H1 (cell line): ENCODE measurements at regions of chr19 and their contacts with region 1.

Region 1: DNA sequence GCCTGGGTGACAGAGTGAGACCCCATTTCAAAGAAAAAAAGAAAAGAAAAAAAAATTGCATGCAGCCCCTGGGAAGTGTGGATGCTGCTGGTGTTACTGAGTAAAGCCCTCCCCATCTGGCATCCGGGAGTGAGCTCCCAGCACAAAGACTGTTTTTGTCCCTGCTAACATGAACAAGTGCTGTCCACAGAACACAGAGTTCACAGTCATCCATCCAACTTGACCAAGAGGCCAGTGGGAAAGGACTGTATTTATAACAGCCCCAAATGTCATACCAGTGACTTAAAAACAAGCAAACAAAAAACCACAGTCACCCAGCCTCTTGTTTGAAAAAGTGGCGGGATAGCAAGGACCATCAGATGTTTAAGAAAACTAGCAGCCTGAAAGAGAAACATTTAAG is 10.8 kb downstream of the FBXO17 start:
- DNase-seq: no peak
- H3K4me3 ChIP-seq: no peak overlapping the region
- H3K27ac ChIP-seq: no peak overlapping the region
- H3K4me1 ChIP-seq: peaks cover 0 to 3% (median under 1%) of the 10 kb centered on the region in 4 experiments; a peak in 2 of 7 replicates
- H3K27me3 ChIP-seq: no peaks in the 10 kb centered on the region
- CTCF ChIP-seq: no peak
- EP300 ChIP-seq: no peak
- POLR2A ChIP-seq: no peak
- RAD21 ChIP-seq: no peak

Region 2: DNA sequence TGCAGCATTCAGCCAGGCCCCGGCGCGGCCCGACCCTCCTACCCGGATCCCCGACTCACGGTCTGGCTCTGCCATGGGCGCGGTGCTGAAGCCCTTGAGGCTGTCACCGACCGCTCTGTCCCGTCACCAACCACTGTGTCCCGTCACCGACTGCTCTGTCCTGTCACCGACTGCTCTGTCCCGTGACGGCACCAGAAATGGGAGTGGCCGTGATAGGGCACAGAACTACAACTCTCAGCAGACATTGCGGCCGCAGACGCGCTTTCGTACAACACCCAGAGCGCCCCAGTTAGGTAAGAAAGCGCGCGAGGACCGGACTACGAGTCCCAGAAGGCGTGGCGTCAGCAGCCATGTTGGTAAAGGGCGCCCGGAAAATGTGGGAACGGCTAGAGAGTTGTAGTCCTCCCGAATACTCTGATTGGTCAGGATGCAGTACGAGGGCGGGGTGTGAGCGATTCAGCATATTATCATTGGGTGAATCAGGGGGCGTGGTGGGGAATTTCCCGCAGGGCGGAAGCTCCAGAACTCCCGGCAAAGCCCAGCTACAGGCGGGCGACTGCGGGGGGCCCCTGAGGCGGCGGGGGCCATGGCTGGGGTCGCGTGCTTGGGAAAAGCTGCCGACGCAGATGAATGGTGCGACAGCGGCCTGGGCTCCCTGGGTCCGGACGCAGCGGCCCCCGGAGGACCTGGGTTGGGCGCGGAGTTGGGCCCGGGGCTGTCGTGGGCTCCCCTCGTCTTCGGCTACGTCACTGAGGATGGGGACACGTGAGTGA is 65.1 kb before region 1 on chr19 and contains the starts of genes NFKBIB and SIRT2:
- CTCF ChIA-PET with region 1: no interaction called
- POLR2A ChIA-PET with region 1: no interaction called
- DNase-seq: peak; percentile 96 to 98
- H3K4me3 ChIP-seq: peak within 1 kb of the TSS; percentile 74 to 90 (median 84)
- H3K27ac ChIP-seq: peak within 1 kb of the TSS; percentile 80
- H3K4me1 ChIP-seq: peaks cover 0 to 9% (median 3%) of the 10 kb centered on the region in 4 experiments; a peak in 4 of 7 replicates
- H3K27me3 ChIP-seq: peaks cover 0 to 9% (median 4%) of the 10 kb centered on the region in 4 experiments; a peak in 3 of 7 replicates
- CTCF ChIP-seq: peak in 1 of 3 experiments; percentile 1; a peak in 1 of 4 replicates
- EP300 ChIP-seq: no peak; a peak in 1 of 3 replicates
- POLR2A ChIP-seq: peak in 1 of 2 experiments; percentile 81; a peak in 2 of 3 replicates
- RAD21 ChIP-seq: no peak
- total RNA-seq, gene NFKBIB: 36.3 and 37.3 TPM in 2 replicates
- total RNA-seq, gene SIRT2: 6.1 and 6.5 TPM in 2 replicates

Region 3: GRCh38 chr19:38912600-38913514 is 51.9 kb before region 1 on chr19:
- CTCF ChIA-PET with region 1: no interaction called
- POLR2A ChIA-PET with region 1: no interaction called
- DNase-seq: no peak
- H3K4me3 ChIP-seq: no peak overlapping the region
- H3K27ac ChIP-seq: no peak overlapping the region
- H3K4me1 ChIP-seq: peaks cover 0 to 8% (median 1%) of the 10 kb centered on the region in 4 experiments; a peak in 3 of 7 replicates
- H3K27me3 ChIP-seq: no peaks in the 10 kb centered on the region; a peak in 1 of 7 replicates
- CTCF ChIP-seq: no peak
- EP300 ChIP-seq: no peak
- POLR2A ChIP-seq: 0 out of 3 replicates have a peak, but pooled peaks of 1 of the 2 experiments have one; percentile 3
- RAD21 ChIP-seq: no peak

Region 4: GRCh38 chr19:38949580-38950367 is 15.0 kb before region 1 on chr19:
- CTCF ChIA-PET with region 1: interaction called, 18 read pairs
- POLR2A ChIA-PET with region 1: interaction called, 5 read pairs
- DNase-seq: peak; percentile 87 to 99
- H3K4me3 ChIP-seq: peak overlapping the region; percentile 36 to 61 (median 54)
- H3K27ac ChIP-seq: no peak overlapping the region; the same call in 1 of the 2 replicates
- H3K4me1 ChIP-seq: peaks cover 0 to 5% (median 0%) of the 10 kb centered on the region in 4 experiments; a peak in 3 of 7 replicates
- H3K27me3 ChIP-seq: peaks cover 0 to 3% (median under 1%) of the 10 kb centered on the region in 4 experiments; a peak in 1 of 7 replicates
- CTCF ChIP-seq: no peak
- EP300 ChIP-seq: no peak
- POLR2A ChIP-seq: no peak
- RAD21 ChIP-seq: no peak

Region 5: GRCh38 chr19:39001041-39001440 is 36.3 kb after region 1 on chr19:
- CTCF ChIA-PET with region 1: no interaction called
- POLR2A ChIA-PET with region 1: no interaction called
- DNase-seq: no peak
- H3K4me3 ChIP-seq: no peak overlapping the region
- H3K27ac ChIP-seq: no peak overlapping the region
- H3K4me1 ChIP-seq: no peaks in the 10 kb centered on the region
- H3K27me3 ChIP-seq: no peaks in the 10 kb centered on the region
- CTCF ChIP-seq: no peak
- EP300 ChIP-seq: no peak
- POLR2A ChIP-seq: no peak
- RAD21 ChIP-seq: no peak

Region 6: DNA sequence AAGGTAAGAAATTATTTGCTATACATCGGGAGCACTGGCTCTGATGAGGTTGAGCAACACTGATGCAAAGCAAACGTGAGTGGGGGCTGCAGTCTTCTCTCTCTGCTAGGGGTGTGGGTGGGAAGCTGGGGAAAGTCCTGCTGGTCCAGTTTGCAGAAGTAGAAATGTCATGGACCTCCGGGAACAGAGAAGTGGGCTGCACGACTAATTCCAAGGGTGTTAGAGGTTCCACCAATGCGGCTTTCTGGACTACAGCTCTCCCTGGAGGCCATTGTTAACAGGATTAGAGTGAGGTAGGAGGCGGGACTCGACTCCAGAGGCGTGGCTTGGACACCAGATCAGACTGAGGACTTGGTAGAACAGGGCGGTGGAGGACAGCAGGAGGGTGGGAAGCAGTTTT is 73.4 kb after region 1 on chr19:
- CTCF ChIA-PET with region 1: interaction called, 10 read pairs
- POLR2A ChIA-PET with region 1: interaction called, 5 read pairs
- DNase-seq: peak in 1 of 2 experiments; percentile 67
- H3K4me3 ChIP-seq: no peak overlapping the region
- H3K27ac ChIP-seq: no peak overlapping the region
- H3K4me1 ChIP-seq: no peaks in the 10 kb centered on the region
- H3K27me3 ChIP-seq: 0 out of 7 replicates have a peak, but pooled peaks cover 0 to 2% (median 0%) of the 10 kb centered on the region in 4 experiments
- CTCF ChIP-seq: peak in 2 of 3 experiments; percentile 14 to 27; a peak in 2 of 4 replicates
- EP300 ChIP-seq: no peak
- POLR2A ChIP-seq: no peak
- RAD21 ChIP-seq: peak; percentile 31 to 46; a peak in 3 of 4 replicates

Region 7: GRCh38 chr19:39046118-39046821 is 81.5 kb after region 1 on chr19:
- CTCF ChIA-PET with region 1: interaction called, 11 read pairs
- POLR2A ChIA-PET with region 1: no interaction called
- DNase-seq: no peak
- H3K4me3 ChIP-seq: no peak overlapping the region
- H3K27ac ChIP-seq: no peak overlapping the region
- H3K4me1 ChIP-seq: no peaks in the 10 kb centered on the region
- H3K27me3 ChIP-seq: no peaks in the 10 kb centered on the region
- CTCF ChIP-seq: no peak
- EP300 ChIP-seq: no peak
- POLR2A ChIP-seq: no peak
- RAD21 ChIP-seq: no peak